BJ (cell line): ENCODE measurements at regions of chr16 and their contacts with region 1.

Region 1: GRCh38 chr16:17173281-17173680 is 297.5 kb downstream of the XYLT1 start:
- DNase-seq: no peak
- H3K4me3 ChIP-seq: no peak overlapping the region
- H3K27me3 ChIP-seq: no peaks in the 10 kb centered on the region
- CTCF ChIP-seq: no peak

Region 2: GRCh38 chr16:17194190-17194780 is 21.0 kb after region 1 on chr16:
- CTCF ChIA-PET with region 1: interaction called, 19 read pairs
- POLR2A ChIA-PET with region 1: no interaction called
- DNase-seq: no peak
- H3K4me3 ChIP-seq: no peak overlapping the region
- H3K27me3 ChIP-seq: no peaks in the 10 kb centered on the region
- CTCF ChIP-seq: peak; percentile 85